PC-9 (cell line): ENCODE measurements at regions of chr22 and their contacts with region 1.

Region 1: DNA sequence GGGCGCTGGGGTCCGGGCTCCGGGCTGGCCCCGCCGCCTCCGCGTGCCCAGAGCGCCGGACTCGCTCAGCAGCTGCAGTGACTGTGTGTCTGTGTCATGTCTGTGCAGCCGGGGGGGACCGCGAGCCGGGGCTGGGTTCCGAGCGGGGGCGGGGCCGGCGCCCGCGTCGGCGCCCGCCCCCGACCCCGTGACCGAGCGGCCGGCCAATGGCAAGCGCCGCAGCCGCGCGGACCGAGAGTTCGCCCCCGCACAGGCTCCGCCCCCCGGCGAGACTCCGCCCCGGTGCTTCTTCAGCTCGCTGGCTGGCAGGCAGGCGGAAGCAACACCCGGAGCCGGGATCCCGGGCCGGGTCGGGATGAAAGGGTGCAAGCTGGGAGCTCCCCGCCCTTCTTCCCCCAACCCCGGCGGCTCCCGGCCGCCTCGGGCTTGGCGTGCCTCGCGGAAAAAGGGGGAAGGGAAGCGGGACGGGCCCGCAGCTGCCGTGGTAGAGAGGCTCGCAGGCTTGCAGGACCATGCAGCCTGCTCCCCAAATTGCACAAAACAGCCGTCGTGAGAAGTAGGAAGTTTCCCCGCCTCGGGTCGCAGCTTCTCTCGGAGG is 750 bp upstream of the LARGE1 start:
- DNase-seq: peak; percentile 78 to 97
- H3K4me3 ChIP-seq: peak overlapping the region; percentile 68
- H3K27ac ChIP-seq: no peak overlapping the region
- H3K4me1 ChIP-seq: 0 out of 2 replicates have a peak, but pooled peaks cover 5% of the 10 kb centered on the region
- H3K27me3 ChIP-seq: peaks cover 64% of the 10 kb centered on the region
- CTCF ChIP-seq: no peak

Region 2: DNA sequence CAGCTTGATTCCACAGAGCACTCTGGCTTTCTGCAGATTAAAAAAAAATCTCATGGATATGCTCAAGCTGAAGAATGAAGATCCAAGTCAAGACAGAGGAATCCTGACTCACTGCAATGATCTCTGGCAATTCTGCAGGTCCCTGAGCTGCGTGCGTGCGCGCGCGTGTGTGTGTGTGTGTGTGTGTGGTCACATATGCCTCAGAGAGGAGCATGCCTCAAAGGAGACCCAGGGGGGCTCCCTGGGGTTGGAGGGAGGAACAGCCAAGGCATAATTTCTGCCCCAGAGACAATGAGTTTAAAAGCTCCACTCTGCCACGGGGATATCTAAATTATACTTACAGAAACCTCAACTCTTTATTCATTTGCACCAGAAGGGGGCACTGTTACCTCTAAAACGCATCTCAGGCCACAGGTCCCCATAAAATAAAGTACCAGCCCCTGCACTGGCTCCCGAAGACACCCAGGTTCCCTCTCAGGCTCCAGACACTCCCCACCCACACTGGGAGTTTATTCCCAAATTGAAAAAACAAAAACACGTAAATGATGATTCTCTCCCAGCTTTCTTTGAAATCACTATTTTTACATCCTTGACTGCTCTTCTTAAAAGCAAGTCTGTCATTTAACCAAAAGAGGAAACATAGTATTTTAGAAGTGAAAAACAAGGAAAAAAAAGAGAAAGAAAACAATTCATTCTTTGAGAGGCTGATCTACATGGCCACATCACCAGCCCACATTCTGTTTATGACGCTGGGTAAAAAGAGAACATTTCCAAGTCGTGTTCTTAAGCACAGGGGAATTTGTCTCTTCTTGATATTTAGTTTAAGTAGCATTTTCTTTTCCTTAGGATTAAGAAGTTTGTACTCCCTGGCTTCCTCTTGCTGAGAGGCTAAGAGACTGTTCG is 401.7 kb before region 1 on chr22:
- CTCF ChIA-PET with region 1: interaction called, 4 read pairs
- POLR2A ChIA-PET with region 1: no interaction called
- intact Hi-C with region 1: loop called (anchors 5 kb)
- DNase-seq: peak; percentile 9 to 38
- H3K4me3 ChIP-seq: no peak overlapping the region
- H3K27ac ChIP-seq: no peak overlapping the region
- H3K4me1 ChIP-seq: no peaks in the 10 kb centered on the region
- H3K27me3 ChIP-seq: no peaks in the 10 kb centered on the region
- CTCF ChIP-seq: peak; percentile 78

Region 3: DNA sequence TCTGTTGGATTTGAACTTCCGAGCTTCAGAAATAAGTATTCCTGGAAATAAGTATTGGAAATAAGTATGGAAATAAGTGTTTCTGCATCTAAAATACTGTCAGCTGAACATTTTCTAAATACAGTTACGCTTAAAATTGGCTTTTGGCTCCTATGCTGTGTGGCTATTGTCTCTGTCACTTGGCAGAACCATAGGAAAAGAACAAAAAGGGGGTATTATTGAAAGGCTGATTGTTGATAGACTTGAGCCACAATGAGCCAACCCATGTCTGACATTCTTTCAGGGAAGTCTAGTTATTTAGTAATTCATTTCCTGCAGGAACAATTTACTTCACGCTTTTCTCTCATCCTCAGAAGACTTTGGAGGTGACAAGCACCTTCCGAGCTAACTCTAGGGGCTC is 31.8 kb after region 1 on chr22:
- CTCF ChIA-PET with region 1: no interaction called
- POLR2A ChIA-PET with region 1: interaction called, 16 read pairs
- intact Hi-C with region 1: no loop called
- DNase-seq: no peak
- H3K4me3 ChIP-seq: no peak overlapping the region
- H3K27ac ChIP-seq: no peak overlapping the region
- H3K4me1 ChIP-seq: no peaks in the 10 kb centered on the region
- H3K27me3 ChIP-seq: peaks cover 32% of the 10 kb centered on the region; the same call in 1 of the 2 replicates
- CTCF ChIP-seq: no peak

Region 4: GRCh38 chr22:35023692-35024363 is 1102.8 kb after region 1 on chr22:
- CTCF ChIA-PET with region 1: no interaction called
- POLR2A ChIA-PET with region 1: no interaction called
- intact Hi-C with region 1: loop called (anchors 5 kb)
- DNase-seq: peak; percentile 44 to 56
- H3K4me3 ChIP-seq: no peak overlapping the region
- H3K27ac ChIP-seq: no peak overlapping the region
- H3K4me1 ChIP-seq: no peaks in the 10 kb centered on the region
- H3K27me3 ChIP-seq: peaks cover 23% of the 10 kb centered on the region; the same call in 1 of the 2 replicates
- CTCF ChIP-seq: peak; percentile 99

Region 5: GRCh38 chr22:35231585-35232084 is 1310.6 kb after region 1 on chr22:
- CTCF ChIA-PET with region 1: no interaction called
- POLR2A ChIA-PET with region 1: no interaction called
- intact Hi-C with region 1: loop called (anchors 2 kb)
- DNase-seq: peak; percentile 74 to 76
- H3K4me3 ChIP-seq: no peak overlapping the region
- H3K27ac ChIP-seq: no peak overlapping the region
- H3K4me1 ChIP-seq: no peaks in the 10 kb centered on the region
- H3K27me3 ChIP-seq: peaks cover 69% of the 10 kb centered on the region
- CTCF ChIP-seq: peak; percentile 100